Right ventricle myocardium inferior (tissue), 1 donor: ENCODE measurements at regions of chr15 and their contacts with region 1.

Region 1: DNA sequence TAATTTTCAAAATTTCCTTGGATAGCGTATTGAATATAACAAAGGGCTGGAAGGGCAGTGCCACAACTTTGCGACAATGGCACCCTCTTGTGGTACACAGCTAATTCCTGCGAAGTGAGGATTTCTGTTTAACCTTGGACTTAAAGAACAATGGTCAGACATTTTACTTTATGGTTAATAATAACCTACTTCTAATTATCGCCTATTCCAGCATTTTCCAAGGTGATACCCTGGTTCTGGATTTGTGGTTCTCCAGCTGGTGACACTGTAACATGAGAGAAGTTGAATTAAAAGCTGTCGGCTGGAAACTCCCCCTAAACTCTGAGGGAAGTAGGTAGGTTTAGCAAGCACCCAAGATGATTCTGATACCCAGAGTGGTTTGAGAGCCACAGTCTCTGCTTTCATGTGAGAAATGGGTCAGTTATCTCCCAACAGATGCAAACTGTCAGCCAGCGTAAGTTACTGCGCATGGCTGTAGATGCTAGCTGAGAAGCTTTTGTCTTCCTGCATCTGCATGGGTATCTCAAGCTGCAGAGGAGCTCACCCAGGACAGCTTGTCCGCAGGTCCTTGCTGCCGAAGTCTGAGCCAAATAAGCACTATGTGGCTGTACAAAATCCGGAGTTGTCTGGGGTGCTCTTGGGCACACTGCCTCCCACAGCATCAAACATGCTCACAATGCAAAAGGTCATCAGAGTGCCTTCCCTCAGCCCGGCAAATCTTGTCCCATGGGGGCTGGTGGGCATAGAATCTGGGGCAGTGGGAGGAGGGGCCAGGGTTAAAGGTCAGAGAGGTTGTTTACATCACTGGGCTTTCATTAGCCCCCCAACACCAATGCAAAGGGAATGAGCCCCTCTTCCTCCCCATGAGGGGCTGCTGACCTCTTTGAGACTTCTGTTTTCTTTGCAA is 6.6 kb upstream of the CHSY1 start:
- DNase-seq: no peak
- ATAC-seq: peak; percentile 53

Region 2: GRCh38 chr15:100572362-100572983 is 686.0 kb before region 1 on chr15:
- intact Hi-C with region 1: no loop called
- DNase-seq: no peak
- ATAC-seq: no peak

Region 3: GRCh38 chr15:100918034-100918689 is 340.3 kb before region 1 on chr15:
- intact Hi-C with region 1: loop called (anchors 5 kb)
- DNase-seq: peak; percentile 92
- ATAC-seq: peak; percentile 94

Region 4: DNA sequence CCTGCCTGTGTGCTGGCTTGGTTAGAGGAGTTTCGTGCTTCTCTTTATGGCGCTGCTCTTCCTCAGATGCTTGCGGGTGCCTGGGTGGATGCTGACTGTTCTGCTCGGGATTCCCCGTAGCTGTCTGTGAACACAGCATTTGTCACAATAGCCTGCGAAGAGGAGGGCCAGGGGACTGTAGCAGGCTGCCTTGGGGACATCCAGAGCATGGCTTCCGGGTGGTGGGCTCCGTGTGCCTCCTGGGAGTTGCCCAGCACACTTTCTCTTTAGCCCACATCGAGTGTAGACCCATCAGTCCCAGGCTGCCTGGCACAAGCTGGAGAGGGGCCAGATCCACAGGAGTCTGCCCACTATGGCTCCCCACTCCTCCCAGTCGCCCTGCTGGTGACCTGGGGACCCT is 317.0 kb before region 1 on chr15:
- intact Hi-C with region 1: no loop called
- DNase-seq: no peak
- ATAC-seq: no peak

Region 5: GRCh38 chr15:101014921-101015841 is 243.3 kb before region 1 on chr15:
- intact Hi-C with region 1: loop called (anchors 1 kb)
- DNase-seq: peak; percentile 88
- ATAC-seq: peak; percentile 74

Region 6: DNA sequence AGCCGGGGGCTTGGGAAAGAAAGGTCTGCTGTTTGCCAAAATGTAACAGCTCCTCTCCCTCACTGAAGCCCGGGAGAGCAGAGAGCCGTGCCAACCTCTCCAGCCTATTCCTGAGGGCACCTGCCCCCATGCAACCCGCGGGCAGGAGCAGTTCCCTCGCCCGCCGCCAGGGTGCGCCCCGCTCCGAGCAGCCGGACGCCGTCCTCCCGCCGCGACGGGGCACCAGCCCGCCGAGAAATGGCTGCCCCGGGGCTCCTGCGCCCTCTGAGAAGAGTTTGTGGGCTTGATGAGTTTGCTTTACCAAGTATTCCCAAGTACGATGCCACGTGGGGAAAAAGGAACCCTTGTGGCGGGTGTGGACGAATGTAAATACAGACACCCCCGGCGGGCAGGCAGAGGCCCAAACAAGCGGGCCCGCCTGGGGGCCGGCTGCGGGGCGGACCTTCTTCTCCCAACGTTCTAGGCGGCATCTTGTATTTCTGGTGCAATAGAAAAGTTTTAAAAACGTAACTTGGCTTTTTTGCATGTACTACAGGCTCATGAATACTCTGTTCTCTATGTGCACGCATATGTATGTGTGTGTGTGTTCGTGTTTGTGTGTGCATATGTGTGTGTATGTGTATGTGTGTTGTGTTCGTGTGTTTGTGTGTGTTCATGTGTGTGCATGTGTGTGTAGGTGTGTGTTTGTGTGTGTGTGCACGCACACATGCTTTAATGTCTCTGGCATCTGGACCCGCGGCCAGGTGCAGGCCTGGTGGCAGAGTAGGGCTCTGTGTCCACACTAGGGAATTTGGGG is 169.5 kb before region 1 on chr15:
- intact Hi-C with region 1: loop called (anchors 1 kb)
- DNase-seq: peak; percentile 92
- ATAC-seq: peak; percentile 77